ENCODE measurements at regions of chr22 and their contacts with region 1.

Region 1: GRCh38 chr22:31272522-31273446 is 19.5 kb downstream of the PIK3IP1 start:
- DNase-seq: peak; percentile 67
- H3K4me3 ChIP-seq: no peak overlapping the region
- H3K27ac ChIP-seq: no peak overlapping the region
- H3K4me1 ChIP-seq: no peaks in the 10 kb centered on the region
- H3K27me3 ChIP-seq: no peaks in the 10 kb centered on the region
- CTCF ChIP-seq: peak; percentile 66 to 69
- POLR2A ChIP-seq: no peak

Region 2: GRCh38 chr22:31133911-31134310 is 138.9 kb before region 1 on chr22:
- CTCF ChIA-PET with region 1: no interaction called
- POLR2A ChIA-PET with region 1: no interaction called
- dilution Hi-C with region 1: no loop called
- intact Hi-C with region 1: no loop called
- DNase-seq: no peak
- H3K4me3 ChIP-seq: no peak overlapping the region
- H3K27ac ChIP-seq: no peak overlapping the region
- H3K4me1 ChIP-seq: no peaks in the 10 kb centered on the region
- H3K27me3 ChIP-seq: no peaks in the 10 kb centered on the region
- CTCF ChIP-seq: no peak
- POLR2A ChIP-seq: no peak

Region 3: DNA sequence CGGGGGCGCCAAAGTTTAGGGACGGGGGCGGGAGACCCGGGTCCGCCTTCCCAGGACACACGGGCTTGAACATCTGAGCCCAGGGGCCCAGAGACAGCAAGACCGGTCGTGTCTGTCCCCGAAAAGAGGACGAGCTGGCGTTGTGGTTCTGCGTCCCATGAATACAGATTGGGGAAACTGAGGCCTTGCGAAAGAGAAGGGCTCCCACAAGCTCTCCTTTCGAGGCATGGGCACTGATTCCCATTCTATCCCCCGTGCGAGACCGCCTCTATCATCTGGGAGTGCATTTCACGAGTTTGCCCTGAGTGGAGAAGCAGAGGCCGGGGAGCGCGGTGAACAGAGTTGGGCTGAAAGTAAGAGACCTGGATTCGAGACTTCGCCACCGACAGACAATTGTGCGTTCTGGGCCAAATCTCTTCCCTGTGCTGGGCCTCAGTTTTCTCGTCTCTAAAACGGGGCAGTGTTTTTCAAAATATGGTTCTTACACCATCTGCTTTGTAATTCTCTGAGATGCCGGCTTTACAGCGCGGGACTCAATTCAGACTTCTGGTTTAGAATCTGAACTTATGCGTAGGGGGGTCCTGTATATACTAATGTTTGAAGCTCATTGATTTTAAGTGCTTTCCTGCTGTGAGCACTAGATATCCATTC is 112.3 kb before region 1 on chr22:
- CTCF ChIA-PET with region 1: interaction called, 12 read pairs
- POLR2A ChIA-PET with region 1: no interaction called
- dilution Hi-C with region 1: no loop called
- intact Hi-C with region 1: no loop called
- DNase-seq: peak; percentile 55
- H3K4me3 ChIP-seq: peak overlapping the region; percentile 17 to 79 (median 52)
- H3K27ac ChIP-seq: peak overlapping the region; percentile 34
- H3K4me1 ChIP-seq: peaks cover 26% of the 10 kb centered on the region
- H3K27me3 ChIP-seq: no peaks in the 10 kb centered on the region
- CTCF ChIP-seq: no peak
- POLR2A ChIP-seq: no peak

Region 4: DNA sequence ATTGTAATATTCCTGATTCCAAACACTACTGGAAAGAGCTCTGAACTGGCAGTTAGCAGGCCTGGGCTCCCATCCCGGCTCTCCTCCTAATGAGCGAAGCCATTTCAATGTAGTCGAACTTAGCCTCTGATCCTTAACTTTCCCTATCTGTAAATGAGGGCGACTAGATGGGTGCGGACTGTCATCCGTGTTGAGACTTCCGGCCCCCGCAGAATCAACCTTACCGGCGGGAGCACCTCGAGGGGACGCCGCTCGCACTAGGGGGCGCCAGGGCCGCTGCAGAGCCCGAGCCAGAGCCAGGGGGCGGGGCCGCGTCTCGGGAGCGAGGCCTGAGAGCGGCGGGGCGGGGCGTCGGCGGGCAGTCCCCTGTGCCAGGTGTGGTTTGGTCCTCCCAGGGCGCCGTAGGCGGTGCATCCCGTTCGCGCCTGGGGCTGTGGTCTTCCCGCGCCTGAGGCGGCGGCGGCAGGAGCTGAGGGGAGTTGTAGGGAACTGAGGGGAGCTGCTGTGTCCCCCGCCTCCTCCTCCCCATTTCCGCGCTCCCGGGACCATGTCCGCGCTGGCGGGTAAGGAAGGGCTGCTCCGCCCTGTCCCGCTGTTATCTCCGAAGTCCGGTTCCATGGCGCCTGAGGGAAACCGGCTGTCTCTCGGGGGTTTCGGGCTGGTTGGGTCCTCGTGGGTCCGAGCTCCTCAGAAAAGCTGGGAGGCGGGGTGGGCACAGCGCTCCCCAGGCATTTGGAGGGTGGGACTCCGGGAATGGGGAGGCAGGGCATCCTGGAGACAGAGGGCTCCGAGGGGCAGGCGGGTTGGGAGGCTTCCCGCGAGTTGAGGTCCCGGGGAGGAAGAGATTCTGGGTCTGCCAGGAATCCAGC is 60.7 kb before region 1 on chr22 and contains the start of gene LIMK2:
- CTCF ChIA-PET with region 1: interaction called, 66 read pairs
- POLR2A ChIA-PET with region 1: interaction called, 4 read pairs
- dilution Hi-C with region 1: no loop called
- intact Hi-C with region 1: loop called (anchors 1 kb)
- DNase-seq: peak; percentile 88
- H3K4me3 ChIP-seq: peak within 1 kb of the TSS; percentile 86 to 97 (median 92)
- H3K27ac ChIP-seq: peak within 1 kb of the TSS; percentile 93
- H3K4me1 ChIP-seq: peaks cover 60% of the 10 kb centered on the region
- H3K27me3 ChIP-seq: no peaks in the 10 kb centered on the region
- CTCF ChIP-seq: peak; percentile 76 to 85
- POLR2A ChIP-seq: peak; percentile 88
- total RNA-seq, gene LIMK2: 71.7 and 76.7 TPM in 2 replicates

Region 5: DNA sequence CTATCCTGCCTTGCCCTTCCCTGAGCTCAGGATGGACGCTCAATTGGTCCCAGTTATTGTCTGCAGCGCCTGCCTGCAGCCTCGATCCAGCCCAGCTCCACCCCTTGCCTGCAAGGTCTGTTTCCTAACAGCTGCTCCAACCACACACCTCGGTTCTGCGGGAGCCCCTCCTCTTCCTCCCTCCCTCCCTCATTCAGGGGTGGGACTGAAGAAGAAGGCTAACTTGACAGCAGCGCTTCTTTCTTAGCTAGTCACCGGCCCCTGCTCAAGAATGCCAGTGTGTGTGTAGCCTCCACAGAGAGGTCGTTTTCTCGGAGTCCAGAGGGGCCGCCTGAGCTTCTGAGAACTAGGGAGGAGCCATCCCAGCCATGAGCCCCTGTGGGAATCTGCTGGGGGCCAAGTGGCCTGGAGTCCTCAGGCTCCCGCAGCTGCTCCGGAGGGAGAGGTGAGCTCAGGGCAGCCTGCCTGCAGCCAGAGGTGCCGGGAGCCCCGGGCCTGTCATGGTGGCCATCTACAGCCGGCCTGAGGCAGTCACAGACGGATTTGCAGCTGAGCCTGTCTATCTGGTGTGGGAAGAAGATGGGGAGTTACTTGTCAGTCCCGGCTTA is 24.5 kb before region 1 on chr22:
- CTCF ChIA-PET with region 1: interaction called, 169 read pairs
- POLR2A ChIA-PET with region 1: interaction called, 3 read pairs
- dilution Hi-C with region 1: no loop called
- intact Hi-C with region 1: no loop called
- DNase-seq: peak; percentile 60
- H3K4me3 ChIP-seq: no peak overlapping the region
- H3K27ac ChIP-seq: no peak overlapping the region
- H3K4me1 ChIP-seq: peaks cover 23% of the 10 kb centered on the region
- H3K27me3 ChIP-seq: no peaks in the 10 kb centered on the region
- CTCF ChIP-seq: no peak
- POLR2A ChIP-seq: no peak

Region 6: GRCh38 chr22:31284281-31285155 is 11.7 kb after region 1 on chr22:
- CTCF ChIA-PET with region 1: interaction called, 18 read pairs
- POLR2A ChIA-PET with region 1: interaction called, 3 read pairs
- dilution Hi-C with region 1: no loop called
- intact Hi-C with region 1: no loop called
- DNase-seq: peak; percentile 41
- H3K4me3 ChIP-seq: no peak overlapping the region
- H3K27ac ChIP-seq: no peak overlapping the region
- H3K4me1 ChIP-seq: peaks cover 21% of the 10 kb centered on the region
- H3K27me3 ChIP-seq: no peaks in the 10 kb centered on the region
- CTCF ChIP-seq: no peak
- POLR2A ChIP-seq: no peak

Region 7: DNA sequence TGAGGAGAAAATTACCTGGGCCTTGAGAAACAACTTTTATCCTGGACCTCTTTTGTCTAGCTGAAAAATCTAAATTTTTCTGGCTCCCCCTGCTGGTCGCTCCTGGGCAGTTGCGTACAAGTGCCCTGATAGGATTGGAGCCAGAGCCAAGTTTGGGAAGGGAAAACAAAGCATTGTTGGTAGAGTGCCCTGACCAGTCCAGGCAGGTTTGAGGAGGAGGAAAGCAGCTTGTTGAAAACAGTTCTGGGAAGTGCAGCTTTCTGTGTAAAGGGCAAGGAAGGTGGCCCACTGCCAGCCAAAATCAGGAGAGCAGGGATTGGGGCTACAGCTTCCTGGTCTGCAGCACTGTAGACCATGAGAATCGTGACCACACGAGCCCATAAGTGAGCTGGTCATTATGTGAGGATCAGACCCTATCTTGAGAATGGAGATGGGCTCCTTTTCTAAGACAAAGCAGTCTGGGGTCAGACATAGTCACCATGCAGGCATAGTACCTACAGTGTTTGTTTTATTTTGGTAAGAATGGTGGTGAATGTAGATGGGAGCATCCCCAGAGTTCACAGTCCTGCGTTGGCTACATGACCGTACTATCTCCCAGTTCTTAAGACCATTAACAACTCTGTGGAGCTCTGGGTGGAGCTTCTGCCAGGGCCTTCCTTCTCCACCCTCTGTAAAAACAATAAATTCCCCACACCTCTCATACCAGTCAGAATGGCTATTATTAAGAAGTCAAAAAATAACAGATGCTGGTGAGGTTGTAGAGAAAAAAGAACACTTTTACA is 40.8 kb after region 1 on chr22:
- CTCF ChIA-PET with region 1: interaction called, 21 read pairs
- POLR2A ChIA-PET with region 1: no interaction called
- dilution Hi-C with region 1: no loop called
- intact Hi-C with region 1: no loop called
- DNase-seq: peak; percentile 88
- H3K4me3 ChIP-seq: no peak overlapping the region
- H3K27ac ChIP-seq: no peak overlapping the region
- H3K4me1 ChIP-seq: peaks cover 2% of the 10 kb centered on the region
- H3K27me3 ChIP-seq: no peaks in the 10 kb centered on the region
- CTCF ChIP-seq: peak; percentile 84 to 86
- POLR2A ChIP-seq: no peak

Region 8: DNA sequence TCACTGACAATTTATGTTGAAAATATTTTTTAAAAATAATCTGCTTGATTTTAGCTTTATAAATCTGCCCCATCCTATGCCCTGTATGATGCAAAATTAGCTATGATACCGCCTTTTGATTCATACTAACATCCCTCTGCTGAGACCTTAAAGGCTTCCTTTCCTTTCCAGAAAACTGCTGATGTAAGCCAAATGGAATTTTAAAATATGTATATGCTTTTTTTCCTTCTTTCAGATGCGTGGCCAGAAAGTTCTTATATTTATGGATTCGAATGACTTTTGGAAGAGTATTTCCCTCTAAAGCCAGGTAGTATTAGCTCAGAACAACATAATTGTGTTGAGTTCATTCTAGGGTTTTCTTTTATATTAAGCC is 258.0 kb after region 1 on chr22:
- CTCF ChIA-PET with region 1: no interaction called
- POLR2A ChIA-PET with region 1: no interaction called
- dilution Hi-C with region 1: no loop called
- intact Hi-C with region 1: no loop called
- DNase-seq: no peak
- H3K4me3 ChIP-seq: no peak overlapping the region
- H3K27ac ChIP-seq: peak overlapping the region; percentile 78
- H3K4me1 ChIP-seq: peaks cover 10% of the 10 kb centered on the region
- H3K27me3 ChIP-seq: no peaks in the 10 kb centered on the region
- CTCF ChIP-seq: no peak
- POLR2A ChIP-seq: no peak

Region 9: GRCh38 chr22:31585161-31585859 is 312.5 kb after region 1 on chr22:
- CTCF ChIA-PET with region 1: no interaction called
- POLR2A ChIA-PET with region 1: no interaction called
- dilution Hi-C with region 1: no loop called
- intact Hi-C with region 1: no loop called
- DNase-seq: no peak
- H3K4me3 ChIP-seq: no peak overlapping the region
- H3K27ac ChIP-seq: no peak overlapping the region
- H3K4me1 ChIP-seq: peaks cover 22% of the 10 kb centered on the region
- H3K27me3 ChIP-seq: no peaks in the 10 kb centered on the region
- CTCF ChIP-seq: no peak
- POLR2A ChIP-seq: no peak

Measured in endothelial cell of umbilical vein (primary cell).